Activated T-helper 1 cell treated with anti-CD3 and anti-CD28 coated beads, Interleukin-12 subunit alpha, Interleukin-12 subunit beta, Interleukin-2, Interleukin-4 antibody, amounts not matched to agents 30 ng/mL and 10 ng/mL and 1 ng/mL, durations not matched to agents 14 hours and 24 hours and 36 hours (primary cell): ENCODE measurements at regions of chr9 and their contacts with region 1.

Region 1: GRCh38 chr9:123225374-123225813 is 43.0 kb downstream of the STRBP start:
- DNase-seq: peak; percentile 50
- H3K4me3 Mint-ChIP-seq: peak overlapping the region; percentile 24
- H3K27ac Mint-ChIP-seq: peak overlapping the region; percentile 68
- H3K4me1 Mint-ChIP-seq: peaks cover 23% of the 10 kb centered on the region
- H3K27me3 Mint-ChIP-seq: no peaks in the 10 kb centered on the region

Region 2: DNA sequence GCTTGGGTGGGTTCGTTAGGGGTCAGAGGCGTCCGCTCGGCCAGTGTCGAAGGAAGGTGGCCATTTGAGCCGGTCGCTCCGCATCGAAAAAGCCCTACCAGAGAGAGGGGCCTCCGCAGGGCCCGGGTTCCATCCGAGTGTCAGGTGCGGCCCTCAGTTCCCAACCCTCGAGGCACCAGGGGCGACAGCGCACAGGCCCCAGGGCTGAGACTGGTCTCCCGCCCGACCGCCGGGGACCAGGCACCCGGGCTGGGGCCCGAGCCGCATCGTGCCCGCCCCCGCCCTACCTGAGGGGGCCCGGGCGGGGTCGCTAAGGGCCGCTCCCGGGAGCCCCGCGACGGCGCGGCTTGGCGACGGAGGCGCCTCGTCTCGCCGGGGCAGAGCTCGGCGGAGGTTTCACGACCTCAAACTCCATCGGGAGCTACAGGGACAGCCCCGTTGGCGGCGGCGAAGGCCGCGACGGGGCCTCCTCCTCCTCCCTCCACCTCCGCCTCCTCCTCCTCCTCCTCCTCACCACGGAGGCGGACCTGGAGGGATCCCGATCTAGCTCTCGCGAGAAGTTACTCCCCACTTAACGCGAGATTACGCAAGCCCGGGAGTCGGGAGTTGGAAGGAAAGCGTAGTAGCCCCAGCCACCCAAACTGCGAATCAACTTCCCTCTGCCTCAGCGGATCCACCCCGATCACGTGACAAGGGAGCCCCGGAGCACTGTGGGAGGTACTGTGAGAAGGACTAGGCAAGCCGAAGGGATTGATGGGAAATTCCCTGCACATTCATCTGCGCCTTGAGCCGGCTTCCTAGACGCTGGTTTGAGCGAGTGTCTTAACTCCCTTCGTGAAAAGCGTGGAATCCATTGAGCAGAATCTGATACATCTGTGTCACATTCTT is 320.3 kb before region 1 on chr9 and contains the start of gene RC3H2:
- intact Hi-C with region 1: loop called (anchors 1 kb)
- DNase-seq: peak; percentile 97
- H3K4me3 Mint-ChIP-seq: peak within 1 kb of the TSS; percentile 95
- H3K27ac Mint-ChIP-seq: peak within 1 kb of the TSS; percentile 96
- H3K4me1 Mint-ChIP-seq: peaks cover 49% of the 10 kb centered on the region
- H3K27me3 Mint-ChIP-seq: no peaks in the 10 kb centered on the region
- total RNA-seq, gene RC3H2: 39.8 and 49.3 TPM in 2 replicates

Region 3: GRCh38 chr9:123069010-123069481 is 156.3 kb before region 1 on chr9:
- intact Hi-C with region 1: loop called (anchors 1 kb)
- DNase-seq: no peak
- H3K4me3 Mint-ChIP-seq: no peak overlapping the region
- H3K27ac Mint-ChIP-seq: no peak overlapping the region
- H3K4me1 Mint-ChIP-seq: peaks cover 17% of the 10 kb centered on the region
- H3K27me3 Mint-ChIP-seq: no peaks in the 10 kb centered on the region

Region 4: DNA sequence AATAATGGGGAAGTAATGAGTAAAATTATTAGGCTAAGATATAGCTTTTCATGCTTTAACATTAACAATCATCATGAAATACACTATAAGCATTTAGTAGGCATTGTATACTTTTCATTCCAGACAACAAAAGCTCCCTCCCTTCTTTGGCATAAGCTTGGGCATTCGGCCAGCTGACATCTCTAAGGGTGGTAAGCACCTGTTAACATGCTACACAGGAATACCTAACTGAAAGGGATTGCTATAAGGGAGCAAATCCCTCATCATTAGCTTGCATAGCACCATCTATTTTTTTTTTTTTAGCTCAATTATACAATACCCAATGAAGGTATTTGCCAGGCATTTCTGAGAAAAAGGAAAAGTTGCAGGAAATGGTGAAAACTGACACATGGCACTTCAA is 26.3 kb after region 1 on chr9:
- intact Hi-C with region 1: no loop called
- DNase-seq: no peak
- H3K4me3 Mint-ChIP-seq: no peak overlapping the region
- H3K27ac Mint-ChIP-seq: no peak overlapping the region
- H3K4me1 Mint-ChIP-seq: peaks cover 5% of the 10 kb centered on the region
- H3K27me3 Mint-ChIP-seq: peaks cover 2% of the 10 kb centered on the region

Region 5: GRCh38 chr9:123322273-123323195 is 97.1 kb after region 1 on chr9:
- intact Hi-C with region 1: loop called (anchors 1 kb)
- DNase-seq: peak; percentile 51
- H3K4me3 Mint-ChIP-seq: peak overlapping the region; percentile 70
- H3K27ac Mint-ChIP-seq: peak overlapping the region; percentile 80
- H3K4me1 Mint-ChIP-seq: peaks cover 37% of the 10 kb centered on the region
- H3K27me3 Mint-ChIP-seq: peaks cover 6% of the 10 kb centered on the region

Region 6: DNA sequence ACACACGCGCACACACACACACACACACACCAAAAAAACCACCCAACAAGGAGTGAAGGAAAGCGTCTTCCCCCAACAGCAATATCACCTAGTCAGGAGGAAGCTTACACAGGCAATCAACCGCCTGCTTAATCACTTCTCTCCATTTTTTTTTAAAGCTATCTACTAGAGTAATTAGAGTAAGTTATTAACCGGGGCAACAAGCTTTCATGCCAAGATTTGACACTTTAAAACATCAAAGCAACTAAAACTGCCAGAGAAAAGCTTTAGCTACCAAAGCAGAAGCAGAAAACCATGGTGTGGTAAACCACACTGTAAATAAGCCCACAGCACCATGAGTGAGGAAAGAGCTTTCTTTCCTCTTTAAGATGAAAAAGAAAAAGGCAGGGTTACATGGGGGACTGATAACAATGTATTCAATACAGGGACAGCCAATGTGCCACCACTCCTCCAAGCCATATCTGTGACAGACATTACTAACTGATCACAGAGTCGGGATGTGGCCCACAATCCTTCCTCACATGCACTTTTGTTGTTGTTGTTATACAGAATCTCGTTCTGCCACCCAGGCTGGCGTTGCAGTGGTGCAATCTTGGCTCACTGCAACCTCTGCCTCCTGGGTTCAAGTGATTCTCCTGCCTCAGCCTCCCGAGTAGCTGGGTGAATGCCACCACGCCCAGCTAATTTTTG is 412.7 kb after region 1 on chr9:
- intact Hi-C with region 1: loop called (anchors 2 kb)
- DNase-seq: peak; percentile 26
- H3K4me3 Mint-ChIP-seq: peak overlapping the region; percentile 72
- H3K27ac Mint-ChIP-seq: peak overlapping the region; percentile 64
- H3K4me1 Mint-ChIP-seq: peaks cover 36% of the 10 kb centered on the region
- H3K27me3 Mint-ChIP-seq: peaks cover 36% of the 10 kb centered on the region